GM12878 (cell line): ENCODE measurements at regions of chr22 and their contacts with region 1.

Region 1: GRCh38 chr22:50148991-50149721 is 21.4 kb upstream of the PANX2 start:
- DNase-seq: peak; percentile 35
- ATAC-seq: peak; percentile 99
- H3K4me3 ChIP-seq: no peak overlapping the region
- H3K27ac ChIP-seq: no peak overlapping the region
- H3K4me1 ChIP-seq: no peaks in the 10 kb centered on the region
- H3K27me3 ChIP-seq: no peaks in the 10 kb centered on the region; a peak in 2 of 4 replicates
- CTCF ChIP-seq: peak; percentile 94 to 98 (median 97)
- EP300 ChIP-seq: no peak
- POLR2A ChIP-seq: no peak
- RAD21 ChIP-seq: peak; percentile 94

Region 2: DNA sequence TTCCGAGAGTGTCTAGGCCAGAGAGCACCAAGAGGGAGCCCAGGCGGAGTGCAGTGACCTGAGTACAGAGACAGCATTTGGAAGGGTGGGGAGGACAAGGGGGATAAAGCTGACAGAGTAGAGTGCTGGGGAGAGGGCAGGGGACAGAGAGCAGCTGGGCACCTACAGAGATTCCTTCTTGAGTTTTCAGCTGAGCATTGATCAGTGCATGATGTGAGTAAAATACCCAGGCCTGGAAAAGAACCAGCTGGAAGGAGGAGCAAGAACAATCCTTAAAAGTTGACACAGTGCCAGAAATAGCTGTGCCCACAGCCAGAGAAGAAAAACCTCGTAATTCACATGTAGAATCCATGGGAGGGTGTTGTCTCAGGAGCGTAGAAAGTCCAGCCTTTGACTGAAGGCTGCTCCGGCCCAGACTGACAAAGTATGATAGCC is 12.6 kb before region 1 on chr22:
- CTCF ChIA-PET with region 1: no interaction called
- POLR2A ChIA-PET with region 1: no interaction called
- RAD21 ChIA-PET with region 1: no interaction called
- SMC1A ChIA-PET with region 1: no interaction called
- in situ Hi-C with region 1: no loop called
- intact Hi-C with region 1: no loop called
- DNase-seq: no peak
- ATAC-seq: no peak
- H3K4me3 ChIP-seq: no peak overlapping the region
- H3K27ac ChIP-seq: no peak overlapping the region
- H3K4me1 ChIP-seq: peaks cover 3% of the 10 kb centered on the region; the same call in 1 of the 2 replicates
- H3K27me3 ChIP-seq: no peaks in the 10 kb centered on the region; a peak in 2 of 4 replicates
- CTCF ChIP-seq: no peak
- EP300 ChIP-seq: no peak
- POLR2A ChIP-seq: no peak
- RAD21 ChIP-seq: no peak

Region 3: GRCh38 chr22:50209893-50210292 is 60.7 kb after region 1 on chr22:
- CTCF ChIA-PET with region 1: interaction called, 15 read pairs
- POLR2A ChIA-PET with region 1: no interaction called
- RAD21 ChIA-PET with region 1: interaction called, 4 read pairs
- SMC1A ChIA-PET with region 1: no interaction called
- in situ Hi-C with region 1: loop called (anchors 5 kb)
- intact Hi-C with region 1: loop called (anchors 1 kb)
- DNase-seq: no peak
- ATAC-seq: peak; percentile 90
- H3K4me3 ChIP-seq: no peak overlapping the region
- H3K27ac ChIP-seq: no peak overlapping the region
- H3K4me1 ChIP-seq: no peaks in the 10 kb centered on the region
- H3K27me3 ChIP-seq: no peaks in the 10 kb centered on the region
- CTCF ChIP-seq: peak; percentile 85 to 91 (median 86)
- EP300 ChIP-seq: no peak
- POLR2A ChIP-seq: 0 out of 2 replicates have a peak, but pooled peaks have one; percentile 12
- RAD21 ChIP-seq: peak; percentile 73

Region 4: GRCh38 chr22:50250555-50251476 is 101.7 kb after region 1 on chr22 and contains the start of gene HDAC10:
- CTCF ChIA-PET with region 1: no interaction called
- POLR2A ChIA-PET with region 1: no interaction called
- RAD21 ChIA-PET with region 1: no interaction called
- SMC1A ChIA-PET with region 1: no interaction called
- in situ Hi-C with region 1: no loop called
- intact Hi-C with region 1: no loop called
- DNase-seq: peak; percentile 40
- ATAC-seq: peak; percentile 91
- H3K4me3 ChIP-seq: peak within 1 kb of the TSS; percentile 98
- H3K27ac ChIP-seq: peak within 1 kb of the TSS; percentile 78
- H3K4me1 ChIP-seq: peaks cover 28% of the 10 kb centered on the region
- H3K27me3 ChIP-seq: no peaks in the 10 kb centered on the region
- CTCF ChIP-seq: no peak
- EP300 ChIP-seq: no peak
- POLR2A ChIP-seq: peak; percentile 88
- RAD21 ChIP-seq: no peak
- polyA plus RNA-seq, gene HDAC10: 0.26 to 0.51 TPM

Region 5: DNA sequence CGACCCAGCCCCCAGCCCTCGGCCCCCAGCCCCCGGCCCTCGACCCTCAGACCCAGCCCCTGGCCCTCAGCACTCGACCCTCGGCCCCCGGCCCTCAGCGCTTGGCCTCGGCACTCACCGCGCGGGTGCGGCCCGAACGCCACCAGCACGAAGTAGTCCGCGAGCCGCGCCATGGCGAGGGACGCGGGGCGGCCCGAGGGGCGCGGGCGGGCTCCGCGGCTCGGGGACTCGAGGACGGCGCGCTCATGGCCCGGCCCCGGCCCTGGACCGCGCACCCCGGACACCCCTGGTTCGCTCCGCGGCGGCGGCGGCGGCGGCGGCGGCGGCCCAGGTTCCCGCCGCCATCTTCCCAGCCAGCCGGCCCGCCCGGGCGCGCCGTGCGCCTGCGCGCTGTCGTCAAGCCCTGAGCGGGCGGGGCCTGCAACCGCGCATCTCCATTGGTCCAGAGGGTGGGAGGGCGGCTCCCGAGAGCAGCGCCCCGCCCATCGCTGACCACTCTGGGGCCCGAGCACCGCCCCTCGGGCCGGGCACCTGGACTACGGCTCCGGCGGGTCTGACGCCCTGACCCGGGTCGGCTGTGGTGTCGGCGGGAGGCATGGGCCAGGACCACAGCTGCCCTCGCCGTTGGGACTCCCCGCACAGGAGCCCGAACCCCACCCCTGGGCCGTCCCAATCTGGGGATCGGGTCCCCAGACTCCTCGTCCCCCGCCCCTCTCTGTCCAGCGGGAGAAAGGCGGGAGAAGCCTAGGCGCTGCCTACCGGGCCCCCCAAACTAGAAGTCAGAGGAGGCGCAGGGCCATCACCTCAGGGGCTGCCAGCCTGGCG is 325.7 kb after region 1 on chr22 and contains the start of gene SBF1:
- CTCF ChIA-PET with region 1: no interaction called
- POLR2A ChIA-PET with region 1: no interaction called
- RAD21 ChIA-PET with region 1: no interaction called
- SMC1A ChIA-PET with region 1: no interaction called
- in situ Hi-C with region 1: no loop called
- intact Hi-C with region 1: no loop called
- DNase-seq: peak; percentile 43
- ATAC-seq: peak; percentile 81
- H3K4me3 ChIP-seq: peak within 1 kb of the TSS; percentile 96
- H3K27ac ChIP-seq: peak within 1 kb of the TSS; percentile 48; the same call in 1 of the 2 replicates
- H3K4me1 ChIP-seq: peaks cover 44% of the 10 kb centered on the region
- H3K27me3 ChIP-seq: no peaks in the 10 kb centered on the region
- CTCF ChIP-seq: no peak
- EP300 ChIP-seq: no peak
- POLR2A ChIP-seq: peak; percentile 63
- RAD21 ChIP-seq: no peak
- polyA plus RNA-seq, gene SBF1: 0.23 to 1.2 TPM